Activated CD4-positive, alpha-beta T cell treated with anti-CD3 and anti-CD28 coated beads, Interleukin-2, amount 10 ng/mL, durations not matched to agents 24 days and 14 days (primary cell): ENCODE measurements at regions of chr16 and their contacts with region 1.

Region 1: DNA sequence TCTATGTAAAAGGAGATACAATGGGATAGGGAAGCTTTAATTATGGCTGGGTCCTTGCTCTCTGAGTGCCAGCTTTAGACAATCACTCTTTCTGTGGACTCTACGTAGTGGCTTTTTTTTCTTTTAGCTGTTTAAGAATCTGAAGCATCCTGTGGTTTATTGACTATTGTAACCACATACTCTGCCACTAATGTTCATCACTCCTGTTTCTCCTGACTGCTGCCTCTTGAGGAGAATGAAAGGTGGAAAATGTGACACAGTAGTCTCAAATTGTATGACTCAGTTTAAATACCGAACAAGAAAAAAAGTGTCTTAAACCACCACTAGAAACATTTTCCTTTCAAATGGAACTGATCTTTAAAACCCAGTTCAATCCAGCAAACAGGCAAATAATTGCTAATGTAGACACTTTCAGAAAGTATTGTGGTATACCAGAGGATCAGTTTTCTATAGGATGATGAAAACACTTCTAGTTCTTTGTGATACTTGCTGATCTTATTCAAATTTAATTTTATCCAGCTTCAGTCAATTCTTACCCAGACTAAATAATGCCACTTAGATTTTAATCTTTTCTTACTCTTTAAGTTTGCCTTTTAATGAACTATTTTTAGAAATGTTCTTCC is 302.7 kb upstream of the PMFBP1 start:
- DNase-seq: no peak
- H3K4me3 Mint-ChIP-seq: no peak overlapping the region
- H3K27ac Mint-ChIP-seq: peak overlapping the region; percentile 5
- H3K4me1 Mint-ChIP-seq: peaks cover 9% of the 10 kb centered on the region
- H3K27me3 Mint-ChIP-seq: peaks cover 3% of the 10 kb centered on the region

Region 2: GRCh38 chr16:72787514-72788268 is 313.1 kb after region 1 on chr16:
- intact Hi-C with region 1: loop called (anchors 5 kb)
- DNase-seq: peak; percentile 90
- H3K4me3 Mint-ChIP-seq: peak overlapping the region; percentile 80
- H3K27ac Mint-ChIP-seq: peak overlapping the region; percentile 65
- H3K4me1 Mint-ChIP-seq: peaks cover 18% of the 10 kb centered on the region
- H3K27me3 Mint-ChIP-seq: peaks cover 36% of the 10 kb centered on the region